B cell (primary cell): ENCODE measurements at regions of chr15 and their contacts with region 1.

Region 1: GRCh38 chr15:50908210-50909009 is at the start of gene AP4E1:
- DNase-seq: peak; percentile 98
- ATAC-seq: peak; percentile 66
- H3K4me3 ChIP-seq: peak within 1 kb of the TSS; percentile 79 to 99 (median 96)
- H3K4me3 Mint-ChIP-seq: peak within 1 kb of the TSS; percentile 95
- H3K27ac ChIP-seq: peak within 1 kb of the TSS; percentile 92 to 100
- H3K27ac Mint-ChIP-seq: peak within 1 kb of the TSS; percentile 99
- H3K4me1 ChIP-seq: peaks cover 12 to 33% of the 10 kb centered on the region in 2 donors
- H3K4me1 Mint-ChIP-seq: peaks cover 31% of the 10 kb centered on the region
- H3K27me3 ChIP-seq: no peaks in the 10 kb centered on the region
- H3K27me3 Mint-ChIP-seq: no peaks in the 10 kb centered on the region
- CTCF ChIP-seq: peak; percentile 89
- total RNA-seq, gene AP4E1: 12.0 and 12.6 TPM in 2 replicates

Region 2: GRCh38 chr15:49620658-49621368 is 1287.6 kb before region 1 on chr15 and contains the starts of genes DTWD1 and FAM227B:
- CTCF ChIA-PET with region 1: no interaction called
- POLR2A ChIA-PET with region 1: no interaction called
- intact Hi-C with region 1: loop called (anchors 2 kb)
- DNase-seq: peak; percentile 96
- ATAC-seq: peak; percentile 98
- H3K4me3 ChIP-seq: peak within 1 kb of the TSS; percentile 75 to 91 (median 83)
- H3K4me3 Mint-ChIP-seq: peak within 1 kb of the TSS; percentile 93
- H3K27ac ChIP-seq: peak within 1 kb of the TSS; percentile 71 to 95
- H3K27ac Mint-ChIP-seq: peak within 1 kb of the TSS; percentile 96
- H3K4me1 ChIP-seq: peaks cover 11 to 18% of the 10 kb centered on the region in 2 donors
- H3K4me1 Mint-ChIP-seq: peaks cover 22% of the 10 kb centered on the region
- H3K27me3 ChIP-seq: no peaks in the 10 kb centered on the region
- H3K27me3 Mint-ChIP-seq: no peaks in the 10 kb centered on the region
- CTCF ChIP-seq: no peak
- total RNA-seq, gene DTWD1: 27.1 and 27.8 TPM in 2 replicates
- total RNA-seq, gene FAM227B: 8.9 and 9.2 TPM in 2 replicates

Region 3: DNA sequence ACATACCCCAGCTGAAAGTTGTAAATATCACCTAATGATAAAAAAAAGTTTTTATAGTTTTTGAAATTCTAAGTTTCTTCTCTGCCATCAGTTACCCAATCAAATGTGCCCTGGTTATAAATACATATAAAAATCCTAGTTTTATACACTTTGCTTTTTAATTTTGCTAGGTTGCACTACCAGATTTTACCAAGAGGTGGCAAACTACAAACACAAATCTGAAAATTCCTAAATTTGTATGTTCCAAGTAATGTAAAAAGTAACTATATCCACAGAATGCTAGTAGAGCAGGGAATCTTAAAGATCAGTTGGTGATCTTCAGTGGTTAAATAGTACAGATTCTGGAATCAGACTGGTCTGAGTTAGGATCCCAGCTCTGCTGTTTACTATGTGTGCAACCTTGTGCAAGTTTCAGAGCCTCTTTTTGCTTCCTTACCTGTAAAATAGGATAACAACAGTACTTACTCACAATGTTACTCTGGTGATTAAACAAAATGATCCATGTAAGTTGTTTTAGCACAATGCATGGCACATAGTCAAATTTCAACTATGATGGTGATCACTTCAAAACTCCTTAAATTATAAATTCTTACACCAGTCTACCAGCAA is 232.8 kb before region 1 on chr15:
- CTCF ChIA-PET with region 1: interaction called, 10 read pairs
- POLR2A ChIA-PET with region 1: no interaction called
- intact Hi-C with region 1: loop called (anchors 1 kb)
- DNase-seq: peak; percentile 54
- ATAC-seq: no peak
- H3K4me3 ChIP-seq: no peak overlapping the region
- H3K4me3 Mint-ChIP-seq: no peak overlapping the region
- H3K27ac ChIP-seq: no peak overlapping the region
- H3K27ac Mint-ChIP-seq: no peak overlapping the region
- H3K4me1 ChIP-seq: peaks cover 3 to 5% of the 10 kb centered on the region in 2 donors
- H3K4me1 Mint-ChIP-seq: peaks cover 24% of the 10 kb centered on the region
- H3K27me3 ChIP-seq: no peaks in the 10 kb centered on the region
- H3K27me3 Mint-ChIP-seq: no peaks in the 10 kb centered on the region
- CTCF ChIP-seq: peak; percentile 96

Region 4: GRCh38 chr15:50765195-50765973 is 143.0 kb before region 1 on chr15 and contains the start of gene SPPL2A:
- CTCF ChIA-PET with region 1: no interaction called
- POLR2A ChIA-PET with region 1: interaction called, 5 read pairs
- intact Hi-C with region 1: loop called (anchors 1 kb)
- DNase-seq: peak; percentile 91
- ATAC-seq: peak; percentile 94
- H3K4me3 ChIP-seq: peak within 1 kb of the TSS; percentile 84 to 98 (median 93)
- H3K4me3 Mint-ChIP-seq: peak within 1 kb of the TSS; percentile 88
- H3K27ac ChIP-seq: peak within 1 kb of the TSS; percentile 91
- H3K27ac Mint-ChIP-seq: peak within 1 kb of the TSS; percentile 93
- H3K4me1 ChIP-seq: peaks cover 17 to 23% of the 10 kb centered on the region in 2 donors
- H3K4me1 Mint-ChIP-seq: peaks cover 39% of the 10 kb centered on the region
- H3K27me3 ChIP-seq: no peaks in the 10 kb centered on the region
- H3K27me3 Mint-ChIP-seq: no peaks in the 10 kb centered on the region
- CTCF ChIP-seq: no peak
- total RNA-seq, gene SPPL2A: 78.3 and 78.4 TPM in 2 replicates

Region 5: DNA sequence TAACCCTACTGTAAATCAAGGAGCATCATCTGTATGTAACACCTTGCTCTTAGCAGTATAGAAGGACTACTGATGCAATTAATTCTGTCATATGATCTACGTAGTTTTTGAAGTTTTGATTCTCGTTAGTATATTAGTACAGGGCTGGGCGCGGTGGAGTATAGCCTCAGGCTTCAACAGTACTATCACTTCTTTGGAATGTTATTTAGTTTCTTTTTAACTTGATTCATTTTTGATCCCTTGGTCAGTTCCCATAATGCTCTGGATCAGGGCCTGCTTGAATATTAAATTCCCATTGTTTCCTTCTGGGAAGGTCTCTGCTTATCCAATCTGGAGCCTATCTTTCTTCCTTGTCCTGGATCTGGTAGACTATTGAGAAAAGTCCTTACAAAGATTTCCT is 23.8 kb before region 1 on chr15:
- CTCF ChIA-PET with region 1: interaction called, 8 read pairs
- POLR2A ChIA-PET with region 1: interaction called, 8 read pairs
- intact Hi-C with region 1: loop called (anchors 1 kb)
- DNase-seq: no peak
- ATAC-seq: no peak
- H3K4me3 ChIP-seq: no peak overlapping the region
- H3K4me3 Mint-ChIP-seq: no peak overlapping the region
- H3K27ac ChIP-seq: no peak overlapping the region
- H3K27ac Mint-ChIP-seq: no peak overlapping the region
- H3K4me1 ChIP-seq: peaks cover 0 to 18% of the 10 kb centered on the region in 2 donors
- H3K4me1 Mint-ChIP-seq: peaks cover 26% of the 10 kb centered on the region
- H3K27me3 ChIP-seq: no peaks in the 10 kb centered on the region
- H3K27me3 Mint-ChIP-seq: no peaks in the 10 kb centered on the region
- CTCF ChIP-seq: no peak